ENCODE measurements at regions of chr13 and their contacts with region 1.

Region 1: DNA sequence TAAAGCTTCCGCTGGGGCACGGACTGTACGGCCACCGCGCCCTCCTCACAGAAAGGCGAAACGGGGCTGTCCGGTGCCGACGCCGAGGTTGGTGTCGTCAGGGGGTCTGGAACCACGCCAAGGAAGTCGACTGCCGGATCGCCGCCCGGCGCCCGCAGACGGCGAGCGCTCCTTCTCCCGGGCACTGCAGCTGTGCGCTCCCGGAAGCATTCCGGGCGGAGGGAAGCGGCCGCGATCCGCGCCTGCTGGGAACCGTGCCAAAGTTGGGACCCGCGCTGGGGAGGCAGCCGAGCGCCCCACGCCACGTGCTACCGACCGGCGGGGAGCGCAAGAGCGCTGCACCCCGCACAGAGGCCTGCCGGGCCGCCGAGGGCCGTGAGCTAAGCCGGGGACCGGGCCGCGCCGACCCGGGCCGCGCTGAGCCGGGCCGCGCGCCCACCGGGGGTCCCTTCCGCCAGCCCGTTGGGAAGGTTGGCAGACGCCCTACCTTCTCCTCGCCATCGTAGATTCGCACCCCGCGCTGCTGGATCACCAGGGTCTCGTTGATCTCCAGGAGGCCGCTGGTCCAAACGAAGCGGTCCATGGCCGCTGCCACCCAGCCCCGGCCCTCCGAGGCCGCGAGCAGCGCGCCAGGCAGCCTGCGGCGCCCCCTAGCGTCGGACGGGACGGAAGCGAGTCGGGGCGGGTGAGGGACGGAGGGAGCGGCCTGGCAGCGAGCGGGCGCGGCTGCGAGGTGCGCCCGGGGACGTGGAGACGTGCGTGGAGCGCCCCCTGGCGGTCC is at the start of gene VPS36:
- DNase-seq: peak; percentile 88 to 98 (median 95)
- ATAC-seq: peak; percentile 58
- H3K4me3 ChIP-seq: peak within 1 kb of the TSS; percentile 90 to 95
- H3K4me3 Mint-ChIP-seq: peak within 1 kb of the TSS; percentile 89
- H3K27ac ChIP-seq: peak within 1 kb of the TSS; percentile 64 to 82
- H3K27ac Mint-ChIP-seq: peak within 1 kb of the TSS; percentile 93
- H3K4me1 ChIP-seq: peaks cover 34% of the 10 kb centered on the region
- H3K4me1 Mint-ChIP-seq: peaks cover 47% of the 10 kb centered on the region
- H3K27me3 ChIP-seq: no peaks in the 10 kb centered on the region
- H3K27me3 Mint-ChIP-seq: no peaks in the 10 kb centered on the region
- CTCF ChIP-seq: peak; percentile 99
- total RNA-seq, gene VPS36: 20.7 to 24.7 TPM

Region 2: DNA sequence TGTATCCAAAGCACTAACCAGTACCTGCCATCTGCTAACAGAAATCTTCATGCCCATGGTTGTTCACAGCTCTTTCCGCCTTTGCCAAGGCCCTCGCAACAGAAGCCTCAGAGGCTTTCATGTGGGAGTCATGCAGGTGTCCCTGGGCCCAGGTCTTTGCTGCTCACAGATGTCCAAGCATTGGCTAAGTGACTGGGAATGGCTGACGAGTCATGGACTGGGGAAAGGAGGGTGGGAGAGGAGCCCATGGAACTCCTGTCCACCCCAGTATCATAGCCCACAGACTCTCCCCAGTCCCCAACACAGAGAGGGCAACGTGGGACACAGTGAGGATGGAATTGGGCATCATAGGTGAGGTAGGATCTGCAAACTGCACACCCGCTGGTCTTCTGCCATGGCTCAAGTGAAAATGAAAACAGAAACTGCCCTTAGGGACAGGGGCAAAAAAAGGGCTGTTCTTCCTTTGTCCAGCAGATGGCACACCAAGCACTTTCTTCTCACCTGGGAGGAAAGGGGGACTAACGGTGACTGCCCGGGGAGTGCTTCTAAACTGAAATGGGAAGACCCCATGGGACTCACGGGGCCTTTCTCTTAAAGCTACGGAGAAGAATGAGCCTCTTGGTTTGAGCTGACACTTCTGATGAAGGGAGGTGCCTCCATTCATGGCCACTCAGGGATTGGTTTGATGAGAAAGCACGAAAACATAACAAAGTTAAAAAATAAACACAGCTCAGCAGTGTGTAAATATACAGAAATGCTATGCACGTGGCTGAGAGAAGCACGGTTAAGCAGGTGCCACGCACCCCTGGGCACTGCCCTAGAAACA is 635.2 kb before region 1 on chr13:
- CTCF ChIA-PET with region 1: no interaction called
- POLR2A ChIA-PET with region 1: no interaction called
- intact Hi-C with region 1: loop called in 1 of 2 experiments (anchors 5 kb)
- DNase-seq: peak; percentile 49 to 89 (median 76)
- ATAC-seq: peak; percentile 82
- H3K4me3 ChIP-seq: peak overlapping the region; percentile 12 to 23
- H3K4me3 Mint-ChIP-seq: peak overlapping the region; percentile 70
- H3K27ac ChIP-seq: peak overlapping the region in 1 of 2 experiments; percentile 18
- H3K27ac Mint-ChIP-seq: peak overlapping the region; percentile 92
- H3K4me1 ChIP-seq: peaks cover 63% of the 10 kb centered on the region
- H3K4me1 Mint-ChIP-seq: peaks cover 79% of the 10 kb centered on the region
- H3K27me3 ChIP-seq: no peaks in the 10 kb centered on the region
- H3K27me3 Mint-ChIP-seq: no peaks in the 10 kb centered on the region
- CTCF ChIP-seq: peak; percentile 92

Region 3: GRCh38 chr13:52011632-52012511 is 438.3 kb before region 1 on chr13 and contains the start of gene ALG11:
- CTCF ChIA-PET with region 1: no interaction called
- POLR2A ChIA-PET with region 1: no interaction called
- intact Hi-C with region 1: loop called (anchors 1 to 5 kb)
- DNase-seq: peak; percentile 98 to 100 (median 99)
- ATAC-seq: peak; percentile 98
- H3K4me3 ChIP-seq: peak within 1 kb of the TSS; percentile 70 to 88
- H3K4me3 Mint-ChIP-seq: peak within 1 kb of the TSS; percentile 99
- H3K27ac ChIP-seq: peak within 1 kb of the TSS; percentile 57 to 75
- H3K27ac Mint-ChIP-seq: peak within 1 kb of the TSS; percentile 95
- H3K4me1 ChIP-seq: peaks cover 15% of the 10 kb centered on the region
- H3K4me1 Mint-ChIP-seq: peaks cover 35% of the 10 kb centered on the region
- H3K27me3 ChIP-seq: no peaks in the 10 kb centered on the region
- H3K27me3 Mint-ChIP-seq: peaks cover 7% of the 10 kb centered on the region
- CTCF ChIP-seq: no peak
- total RNA-seq, gene ALG11: 34.0 to 35.1 TPM

Region 4: GRCh38 chr13:52348071-52348470 is 102.1 kb before region 1 on chr13:
- CTCF ChIA-PET with region 1: interaction called, 16 read pairs
- POLR2A ChIA-PET with region 1: interaction called, 5 read pairs
- intact Hi-C with region 1: loop called (anchors 1 to 2 kb)
- DNase-seq: no peak
- ATAC-seq: no peak
- H3K4me3 ChIP-seq: no peak overlapping the region
- H3K4me3 Mint-ChIP-seq: no peak overlapping the region
- H3K27ac ChIP-seq: no peak overlapping the region
- H3K27ac Mint-ChIP-seq: no peak overlapping the region
- H3K4me1 ChIP-seq: no peaks in the 10 kb centered on the region
- H3K4me1 Mint-ChIP-seq: no peaks in the 10 kb centered on the region
- H3K27me3 ChIP-seq: no peaks in the 10 kb centered on the region
- H3K27me3 Mint-ChIP-seq: peaks cover 11% of the 10 kb centered on the region
- CTCF ChIP-seq: no peak

Region 5: DNA sequence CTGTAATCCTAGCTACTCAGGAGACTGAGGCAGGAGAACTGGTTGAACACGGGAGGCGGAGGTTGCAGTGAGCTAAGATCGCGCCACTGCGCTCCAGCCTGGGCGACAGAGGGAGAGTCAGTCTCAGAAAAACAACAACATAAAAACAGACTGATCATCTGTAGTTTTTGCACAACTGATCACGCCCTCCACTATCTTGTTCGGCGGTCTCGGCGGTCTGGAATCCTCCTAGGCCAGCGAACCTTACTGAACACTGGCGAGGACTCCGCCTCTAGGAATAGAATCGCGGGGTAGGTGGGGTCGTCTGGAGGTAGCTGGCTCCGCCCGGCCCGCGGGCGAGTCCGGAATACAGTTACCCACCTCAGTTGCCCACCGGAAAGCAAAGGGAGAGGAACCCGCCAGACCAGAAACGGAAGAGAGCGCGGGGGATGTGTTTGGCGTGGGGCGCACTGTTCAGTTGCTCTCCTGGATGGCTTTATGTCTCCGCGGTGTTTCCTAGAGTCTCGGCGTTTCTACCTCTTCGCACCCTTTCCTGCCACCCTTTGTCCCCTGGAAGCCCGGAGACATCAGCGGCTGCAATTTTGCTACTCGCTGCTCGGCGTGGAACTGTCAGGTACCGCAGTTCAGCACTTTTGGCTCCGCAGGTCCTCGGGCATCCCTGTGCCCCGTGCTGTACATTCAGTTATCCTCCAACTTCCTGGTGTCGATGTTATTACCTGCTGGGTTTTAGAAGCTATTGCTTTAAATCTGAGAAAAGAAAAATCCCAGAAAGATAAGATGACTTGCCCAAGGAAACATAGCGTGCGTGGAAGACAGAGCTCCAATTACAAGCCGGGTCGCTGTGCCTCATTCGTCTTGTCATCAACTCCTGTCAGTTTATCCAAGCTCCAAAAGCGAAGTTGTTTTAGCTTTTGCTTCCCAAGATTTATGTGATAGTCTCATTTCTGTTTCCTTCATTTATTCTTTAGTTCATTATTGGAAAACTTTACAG is 167.2 kb after region 1 on chr13:
- CTCF ChIA-PET with region 1: interaction called, 5 read pairs
- POLR2A ChIA-PET with region 1: interaction called, 7 read pairs
- intact Hi-C with region 1: loop called (anchors 1 to 5 kb)
- DNase-seq: peak; percentile 71 to 91 (median 85)
- ATAC-seq: peak; percentile 94
- H3K4me3 ChIP-seq: peak overlapping the region; percentile 80 to 94
- H3K4me3 Mint-ChIP-seq: peak overlapping the region; percentile 99
- H3K27ac ChIP-seq: peak overlapping the region; percentile 59 to 76
- H3K27ac Mint-ChIP-seq: peak overlapping the region; percentile 98
- H3K4me1 ChIP-seq: peaks cover 7% of the 10 kb centered on the region
- H3K4me1 Mint-ChIP-seq: peaks cover 46% of the 10 kb centered on the region
- H3K27me3 ChIP-seq: no peaks in the 10 kb centered on the region
- H3K27me3 Mint-ChIP-seq: no peaks in the 10 kb centered on the region
- CTCF ChIP-seq: no peak